Head of caudate nucleus (tissue), 42 donors: ENCODE measurements at regions of chr6 and their contacts with region 1.

Region 1: DNA sequence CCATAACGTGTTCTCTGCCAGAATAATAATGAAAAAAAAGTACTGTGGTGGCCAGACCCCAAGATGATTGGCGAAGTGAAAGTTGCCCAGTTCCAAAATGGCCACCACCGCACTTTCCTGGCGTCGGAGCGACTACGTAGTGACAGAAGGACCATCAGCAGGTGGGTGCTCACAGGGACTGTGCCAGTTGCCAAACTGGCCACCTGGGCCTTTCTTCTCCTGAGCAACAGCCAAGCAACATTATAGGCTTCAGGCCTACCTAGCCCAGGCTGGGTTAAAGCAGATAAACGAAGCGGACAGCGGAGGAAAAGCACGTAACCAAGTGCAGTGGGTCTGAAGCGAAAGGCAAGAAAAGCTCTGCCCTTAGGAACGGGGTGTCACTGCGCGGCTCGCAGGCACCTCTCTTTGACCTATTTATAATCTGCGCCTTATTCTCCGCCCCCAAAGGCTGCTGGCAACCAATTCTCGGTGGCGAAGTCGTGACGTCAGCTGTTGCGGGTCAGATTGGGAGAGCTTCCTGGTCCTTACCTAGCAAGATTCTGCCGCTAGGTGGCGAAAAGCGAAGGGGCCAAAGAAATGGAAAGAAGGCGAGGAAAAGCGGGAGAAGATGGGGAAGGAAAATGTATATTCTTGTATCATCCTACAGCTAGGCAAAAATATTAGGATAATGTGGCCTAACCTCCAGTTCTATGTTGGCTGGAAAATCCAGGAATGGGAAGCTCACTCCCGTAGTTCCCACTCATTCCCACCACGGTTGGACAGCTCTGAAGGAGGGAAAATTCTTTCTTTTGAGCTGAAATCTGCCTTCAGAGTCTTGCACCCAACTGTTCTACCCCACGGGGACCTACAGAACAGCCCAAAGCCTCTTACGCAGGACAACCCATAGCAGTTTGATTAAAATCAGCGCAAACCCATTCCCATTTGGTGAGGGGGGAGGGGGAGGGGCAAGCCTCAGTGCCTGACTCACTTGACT is 6.9 kb upstream of the MOG start:
- DNase-seq: peak; percentile 97 to 100 (median 99)

Region 2: DNA sequence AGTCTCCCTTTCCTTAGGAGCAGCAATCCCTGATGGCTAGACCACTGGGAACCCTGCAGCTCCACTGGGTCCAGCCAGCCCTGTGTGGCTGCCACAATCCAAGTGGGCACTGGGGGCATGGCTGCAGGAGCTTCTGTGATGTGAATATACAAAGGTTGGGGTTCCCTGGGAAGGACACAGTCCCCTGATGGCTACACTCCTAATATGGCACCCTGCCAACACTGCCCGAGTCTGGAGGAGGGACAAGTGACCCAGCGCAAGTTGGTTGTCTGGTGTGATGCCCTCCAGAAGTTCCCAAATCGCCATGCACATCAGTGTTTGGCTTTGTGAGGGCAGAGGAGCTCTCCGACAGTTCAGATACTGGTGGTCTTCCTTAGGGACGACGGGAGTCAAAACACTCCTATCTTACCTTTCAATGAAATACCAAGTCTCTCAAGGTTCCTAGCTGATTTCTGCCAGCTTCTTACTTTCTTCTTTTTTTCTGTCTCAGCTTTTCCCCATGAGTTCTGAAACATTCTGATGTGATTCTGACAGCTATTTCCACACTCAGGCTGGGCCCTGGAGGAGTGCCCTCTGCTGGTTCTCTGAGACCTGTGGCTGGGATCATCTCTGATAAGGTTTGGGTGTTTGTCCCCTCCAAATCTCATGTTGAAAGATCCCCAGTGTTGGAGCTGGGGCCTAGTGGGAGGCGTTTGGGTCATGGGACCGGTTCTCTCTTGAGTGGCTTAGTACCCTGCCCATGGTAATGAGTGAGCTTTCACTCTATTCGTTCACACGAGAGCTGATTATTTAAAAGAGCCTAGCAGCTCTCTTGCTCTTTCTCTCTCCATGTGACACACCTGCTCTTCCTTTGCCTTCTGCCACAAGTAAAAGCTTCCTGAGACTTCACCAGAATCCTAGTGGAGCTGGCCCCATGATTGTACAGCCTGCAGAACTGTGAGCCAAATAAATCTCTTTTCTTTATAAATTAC is 46.5 kb after region 1 on chr6:
- intact Hi-C with region 1: loop called (anchors 10 kb)
- DNase-seq: peak in 41 of 42 donors; percentile 11 to 83 (median 53)